Activated CD4-positive, alpha-beta T cell treated with anti-CD3 and anti-CD28 coated beads for 36 hours (primary cell): ENCODE measurements at regions of chr3 and their contacts with region 1.

Region 1: DNA sequence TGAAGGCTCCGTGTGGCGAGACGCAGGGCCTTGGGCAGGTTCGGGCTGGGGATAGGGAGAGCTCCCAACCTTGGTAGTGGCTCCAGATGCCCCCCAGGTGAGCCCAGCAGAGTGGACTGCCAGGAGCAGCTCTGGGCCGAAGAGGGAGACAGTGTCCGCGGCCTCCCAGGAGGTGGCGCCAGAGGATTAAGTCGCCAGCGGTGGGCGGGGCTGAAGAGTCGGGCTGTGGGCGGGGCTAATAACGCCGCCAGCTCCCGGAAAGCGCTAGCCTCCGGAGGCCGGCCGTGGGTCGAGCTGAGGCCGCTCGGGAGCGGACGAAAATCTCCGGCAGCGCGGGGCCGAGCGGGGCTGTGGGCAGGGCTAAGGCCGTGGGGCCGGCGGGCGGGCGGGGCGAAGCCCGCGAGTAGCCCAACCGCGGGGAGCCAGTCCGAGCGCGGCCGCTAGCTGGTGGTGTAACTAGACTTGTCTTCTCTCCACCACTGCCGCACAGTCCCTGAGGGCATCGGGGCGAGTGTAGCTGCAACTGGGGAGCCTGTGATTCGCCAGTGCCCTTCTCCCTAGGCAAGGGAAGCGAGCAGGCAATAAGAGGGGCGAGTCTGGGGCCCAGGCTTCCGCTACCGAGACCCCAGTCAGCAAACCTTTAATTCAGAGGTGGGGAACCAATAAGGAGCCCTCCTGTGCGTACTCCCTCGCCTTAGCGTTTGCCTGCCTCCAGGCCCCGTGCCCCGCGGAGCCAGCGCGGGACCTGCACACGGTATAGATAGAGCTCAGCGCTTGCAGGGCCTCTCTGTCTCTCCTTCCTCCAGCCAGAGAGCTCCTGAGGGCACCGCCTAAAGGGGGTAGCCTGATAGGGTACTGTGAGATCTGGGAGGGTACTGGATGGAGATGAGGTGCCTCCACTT is 14.4 kb upstream of the BSN start:
- DNase-seq: peak; percentile 96
- ATAC-seq: peak; percentile 96
- H3K4me3 Mint-ChIP-seq: peak overlapping the region; percentile 62
- H3K27ac Mint-ChIP-seq: no peak overlapping the region
- H3K4me1 Mint-ChIP-seq: no peaks in the 10 kb centered on the region
- H3K27me3 Mint-ChIP-seq: no peaks in the 10 kb centered on the region

Region 2: GRCh38 chr3:49032646-49033304 is 507.1 kb before region 1 on chr3:
- CTCF ChIA-PET with region 1: no interaction called
- POLR2A ChIA-PET with region 1: no interaction called
- intact Hi-C with region 1: no loop called
- DNase-seq: no peak
- ATAC-seq: no peak
- H3K4me3 Mint-ChIP-seq: no peak overlapping the region
- H3K27ac Mint-ChIP-seq: no peak overlapping the region
- H3K4me1 Mint-ChIP-seq: peaks cover 15% of the 10 kb centered on the region
- H3K27me3 Mint-ChIP-seq: no peaks in the 10 kb centered on the region

Region 3: DNA sequence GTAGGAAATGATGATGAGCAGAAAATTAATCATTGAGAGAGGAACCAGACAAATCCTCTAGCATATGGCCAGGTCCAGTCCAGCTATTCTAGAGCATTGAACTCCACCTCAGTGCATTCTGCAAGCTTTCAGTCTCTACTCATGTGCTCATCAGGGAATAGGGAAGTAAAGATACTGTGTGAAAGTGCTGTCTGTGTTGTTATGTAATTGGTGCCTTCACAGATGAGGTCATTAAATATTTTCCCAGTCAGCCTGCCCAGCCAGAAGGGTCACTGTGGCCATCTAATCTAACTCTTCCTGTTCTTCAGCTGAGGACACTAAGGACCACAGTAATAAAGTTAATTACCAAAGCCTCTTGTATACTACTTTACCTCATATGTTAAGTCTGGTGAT is 291.1 kb before region 1 on chr3:
- CTCF ChIA-PET with region 1: no interaction called
- POLR2A ChIA-PET with region 1: no interaction called
- intact Hi-C with region 1: no loop called
- DNase-seq: no peak
- ATAC-seq: no peak
- H3K4me3 Mint-ChIP-seq: no peak overlapping the region
- H3K27ac Mint-ChIP-seq: no peak overlapping the region
- H3K4me1 Mint-ChIP-seq: no peaks in the 10 kb centered on the region
- H3K27me3 Mint-ChIP-seq: no peaks in the 10 kb centered on the region

Region 4: DNA sequence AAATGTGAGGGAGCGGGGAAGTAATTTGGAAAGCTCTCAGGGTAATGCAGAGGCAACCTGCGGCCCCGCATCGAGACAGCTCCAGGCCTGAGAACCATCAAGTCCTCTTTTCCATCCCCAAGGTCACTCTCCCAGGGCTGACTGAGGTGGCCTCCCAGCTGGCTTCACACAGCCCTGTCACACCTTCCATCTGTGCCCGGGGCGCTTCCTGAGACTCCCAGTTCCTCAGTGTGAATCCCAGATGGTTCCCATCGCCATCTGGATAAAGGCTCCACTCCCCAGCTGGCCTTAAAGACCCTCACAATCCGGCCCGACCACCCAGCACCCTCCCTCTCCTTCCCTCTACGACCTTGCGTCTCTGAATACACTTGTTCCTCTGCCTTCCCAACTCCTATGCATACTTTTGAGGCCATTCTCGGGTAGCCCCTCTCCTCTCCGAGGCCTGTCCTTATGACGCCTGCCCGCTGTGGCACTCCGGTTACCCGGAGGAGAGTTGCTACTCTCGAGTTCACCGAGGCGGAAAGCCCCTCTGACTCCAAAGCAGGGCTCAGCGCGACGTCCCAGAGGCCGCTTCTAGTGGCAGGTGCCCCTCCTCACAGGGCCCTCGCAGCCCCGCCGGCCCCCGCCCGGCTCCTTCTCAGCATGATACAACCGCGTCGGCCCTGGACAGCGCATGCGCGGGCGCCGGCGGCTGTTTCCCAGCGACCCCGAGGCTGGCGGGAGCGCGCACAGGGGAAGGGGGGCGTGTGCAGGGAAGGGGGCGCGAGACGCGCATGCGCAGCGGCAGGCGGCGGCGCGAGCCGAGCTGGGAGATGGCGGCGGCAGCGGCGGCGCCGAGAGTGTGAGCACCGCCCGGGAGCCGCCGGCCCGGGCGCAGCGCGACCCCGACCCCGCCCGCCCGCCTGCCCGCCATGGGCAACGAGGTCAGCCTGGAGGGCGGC is 14.1 kb after region 1 on chr3 and contains the start of gene BSN:
- CTCF ChIA-PET with region 1: interaction called, 37 read pairs
- POLR2A ChIA-PET with region 1: interaction called, 7 read pairs
- intact Hi-C with region 1: loop called in 1 of 2 experiments (anchors 1 kb)
- DNase-seq: peak; percentile 95
- ATAC-seq: peak; percentile 92
- H3K4me3 Mint-ChIP-seq: peak within 1 kb of the TSS; percentile 72
- H3K27ac Mint-ChIP-seq: peak within 1 kb of the TSS; percentile 24
- H3K4me1 Mint-ChIP-seq: peaks cover 11% of the 10 kb centered on the region
- H3K27me3 Mint-ChIP-seq: peaks cover 34% of the 10 kb centered on the region
- total RNA-seq, gene BSN: 0.09 to 0.11 TPM

Region 5: DNA sequence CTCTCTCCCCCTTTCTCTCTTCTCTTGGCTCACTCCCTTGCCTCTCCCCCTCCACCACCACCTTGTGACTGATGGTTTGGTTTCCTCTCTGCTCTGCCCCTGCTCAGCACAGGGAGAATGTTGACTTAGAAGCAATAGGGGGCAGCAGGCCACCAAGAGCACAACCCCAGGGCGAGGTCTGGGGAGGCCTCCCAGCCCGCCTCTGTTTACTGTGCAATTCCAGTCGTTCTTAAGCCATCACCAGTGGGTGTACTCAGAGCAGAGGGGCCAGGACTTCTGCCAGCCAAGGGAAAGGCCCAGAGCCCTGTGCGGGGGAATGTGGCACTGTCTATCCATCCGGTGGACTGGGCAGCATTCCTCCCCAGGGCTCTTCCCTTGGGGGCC is 128.5 kb after region 1 on chr3:
- CTCF ChIA-PET with region 1: interaction called, 122 read pairs
- POLR2A ChIA-PET with region 1: interaction called, 14 read pairs
- intact Hi-C with region 1: loop called (anchors 1 kb)
- DNase-seq: no peak
- ATAC-seq: no peak
- H3K4me3 Mint-ChIP-seq: no peak overlapping the region
- H3K27ac Mint-ChIP-seq: no peak overlapping the region
- H3K4me1 Mint-ChIP-seq: peaks cover 10% of the 10 kb centered on the region
- H3K27me3 Mint-ChIP-seq: no peaks in the 10 kb centered on the region

Region 6: GRCh38 chr3:49839193-49839809 is 299.4 kb after region 1 on chr3:
- CTCF ChIA-PET with region 1: interaction called, 5 read pairs
- POLR2A ChIA-PET with region 1: no interaction called
- intact Hi-C with region 1: loop called in 1 of 2 experiments (anchors 1 kb)
- DNase-seq: peak; percentile 89
- ATAC-seq: peak; percentile 95
- H3K4me3 Mint-ChIP-seq: no peak overlapping the region
- H3K27ac Mint-ChIP-seq: no peak overlapping the region
- H3K4me1 Mint-ChIP-seq: no peaks in the 10 kb centered on the region
- H3K27me3 Mint-ChIP-seq: no peaks in the 10 kb centered on the region

Region 7: DNA sequence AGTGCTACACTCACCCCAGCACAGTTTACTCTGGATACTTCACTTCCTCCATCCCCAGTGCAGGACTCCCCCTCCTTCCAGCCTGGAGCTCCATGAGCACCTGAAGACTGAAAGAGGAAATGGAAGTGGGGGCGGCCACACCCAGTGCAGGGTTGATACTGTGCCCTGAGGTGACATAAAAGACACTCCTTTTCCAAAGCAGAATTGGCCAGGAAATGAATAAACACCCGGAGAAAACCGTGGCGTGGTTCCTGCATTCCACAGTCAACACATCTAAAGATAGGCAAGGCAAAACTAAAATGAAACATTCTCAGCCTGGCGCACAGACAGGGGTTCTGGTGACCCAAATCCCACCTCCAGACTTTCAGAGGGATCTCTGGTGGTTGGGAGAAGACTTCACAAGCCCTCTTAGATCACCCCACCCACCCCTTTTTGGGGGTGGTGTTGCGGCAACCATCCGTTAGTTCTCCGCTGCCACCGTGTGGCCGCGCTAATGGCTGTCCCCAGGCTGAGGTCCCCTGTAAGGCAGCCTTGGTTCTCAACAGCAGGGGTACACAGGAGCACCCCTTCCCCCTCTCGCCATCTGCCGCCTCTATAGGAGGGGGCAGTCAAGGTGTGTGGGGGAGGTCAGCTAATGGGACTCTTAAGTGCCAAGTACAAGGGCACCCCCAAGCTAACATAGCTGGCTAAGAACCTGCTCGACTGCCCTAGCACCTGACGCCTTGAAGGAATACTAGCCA is 366.3 kb after region 1 on chr3:
- CTCF ChIA-PET with region 1: interaction called, 3 read pairs
- POLR2A ChIA-PET with region 1: interaction called, 4 read pairs
- intact Hi-C with region 1: loop called in 1 of 2 experiments (anchors 5 kb)
- DNase-seq: peak; percentile 77
- ATAC-seq: peak; percentile 45
- H3K4me3 Mint-ChIP-seq: peak overlapping the region; percentile 8
- H3K27ac Mint-ChIP-seq: peak overlapping the region; percentile 48
- H3K4me1 Mint-ChIP-seq: peaks cover 22% of the 10 kb centered on the region
- H3K27me3 Mint-ChIP-seq: no peaks in the 10 kb centered on the region